ENCODE measurements at regions of chr2 and their contacts with region 1.

Region 1: DNA sequence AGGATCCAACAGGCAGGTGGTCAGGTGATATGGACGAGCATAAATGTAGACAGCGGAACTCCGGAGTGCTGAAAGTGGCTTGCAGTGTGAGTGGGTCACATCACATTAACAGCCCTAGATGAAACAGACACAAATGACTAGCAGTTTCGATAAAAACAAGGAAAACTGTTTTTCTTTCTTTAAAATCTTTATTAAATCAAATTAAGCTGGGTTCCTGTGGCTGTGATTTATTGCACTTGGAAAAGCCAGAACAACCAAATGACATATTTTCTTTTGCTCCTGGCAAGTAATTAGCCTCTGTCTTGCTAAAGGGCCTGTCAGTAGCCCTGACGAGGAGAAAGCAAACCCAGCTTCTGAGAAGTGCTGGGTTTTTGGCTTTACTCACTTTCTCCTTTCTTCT is 152.9 kb upstream of the DDX18 start:
- DNase-seq: no peak
- H3K4me3 ChIP-seq: no peak overlapping the region
- H3K27ac ChIP-seq: no peak overlapping the region
- H3K4me1 ChIP-seq: no peaks in the 10 kb centered on the region
- H3K27me3 ChIP-seq: no peaks in the 10 kb centered on the region
- CTCF ChIP-seq: no peak
- EP300 ChIP-seq: no peak
- POLR2A ChIP-seq: no peak

Region 2: GRCh38 chr2:117738991-117739839 is 77.6 kb after region 1 on chr2:
- intact Hi-C with region 1: loop called in 1 of 4 experiments (anchors 2 kb)
- DNase-seq: no peak
- H3K4me3 ChIP-seq: no peak overlapping the region
- H3K27ac ChIP-seq: no peak overlapping the region
- H3K4me1 ChIP-seq: no peaks in the 10 kb centered on the region
- H3K27me3 ChIP-seq: no peaks in the 10 kb centered on the region
- CTCF ChIP-seq: no peak
- EP300 ChIP-seq: no peak
- POLR2A ChIP-seq: no peak